ENCODE measurements at regions of chr12 and their contacts with region 1.

Region 1: GRCh38 chr12:77049767-77050353 is 15.5 kb downstream of the E2F7 start:
- DNase-seq: peak in 3 of 9 experiments; percentile 5 to 70 (median 58)
- ATAC-seq: peak; percentile 76
- H3K4me3 ChIP-seq: no peak overlapping the region
- H3K4me3 Mint-ChIP-seq: no peak overlapping the region
- H3K27ac ChIP-seq: no peak overlapping the region
- H3K27ac Mint-ChIP-seq: no peak overlapping the region
- H3K4me1 ChIP-seq: no peaks in the 10 kb centered on the region
- H3K4me1 Mint-ChIP-seq: peaks cover 2% of the 10 kb centered on the region
- H3K27me3 ChIP-seq: no peaks in the 10 kb centered on the region
- H3K27me3 Mint-ChIP-seq: no peaks in the 10 kb centered on the region
- CTCF ChIP-seq: peak; percentile 65

Region 2: GRCh38 chr12:77060136-77060882 is 10.4 kb after region 1 on chr12:
- CTCF ChIA-PET with region 1: interaction called, 17 read pairs
- POLR2A ChIA-PET with region 1: no interaction called
- intact Hi-C with region 1: no loop called
- DNase-seq: peak in 1 of 9 experiments; percentile 10
- ATAC-seq: no peak
- H3K4me3 ChIP-seq: no peak overlapping the region
- H3K4me3 Mint-ChIP-seq: no peak overlapping the region
- H3K27ac ChIP-seq: no peak overlapping the region
- H3K27ac Mint-ChIP-seq: no peak overlapping the region
- H3K4me1 ChIP-seq: peaks cover 5% of the 10 kb centered on the region
- H3K4me1 Mint-ChIP-seq: peaks cover 4% of the 10 kb centered on the region
- H3K27me3 ChIP-seq: peaks cover 5 to 9% of the 10 kb centered on the region in 2 experiments
- H3K27me3 Mint-ChIP-seq: peaks cover 33% of the 10 kb centered on the region
- CTCF ChIP-seq: no peak

Region 3: GRCh38 chr12:77102691-77103090 is 52.8 kb after region 1 on chr12:
- CTCF ChIA-PET with region 1: no interaction called
- POLR2A ChIA-PET with region 1: no interaction called
- intact Hi-C with region 1: no loop called
- DNase-seq: no peak
- ATAC-seq: no peak
- H3K4me3 ChIP-seq: no peak overlapping the region
- H3K4me3 Mint-ChIP-seq: no peak overlapping the region
- H3K27ac ChIP-seq: no peak overlapping the region
- H3K27ac Mint-ChIP-seq: no peak overlapping the region
- H3K4me1 ChIP-seq: no peaks in the 10 kb centered on the region
- H3K4me1 Mint-ChIP-seq: no peaks in the 10 kb centered on the region
- H3K27me3 ChIP-seq: no peaks in the 10 kb centered on the region
- H3K27me3 Mint-ChIP-seq: peaks cover 7% of the 10 kb centered on the region
- CTCF ChIP-seq: no peak

Measured in CD8-positive, alpha-beta T cell (primary cell).